OCI-LY7 (cell line): ENCODE measurements at regions of chr9 and their contacts with region 1.

Region 1: GRCh38 chr9:94681508-94681907 is 42.2 kb upstream of the FBP1 start:
- DNase-seq: peak; percentile 74
- H3K4me3 ChIP-seq: no peak overlapping the region
- H3K27ac ChIP-seq: no peak overlapping the region
- H3K4me1 ChIP-seq: no peaks in the 10 kb centered on the region
- CTCF ChIP-seq: peak; percentile 88

Region 2: GRCh38 chr9:94726495-94727191 is 45.1 kb after region 1 on chr9 and contains the start of gene AOPEP:
- CTCF ChIA-PET with region 1: no interaction called
- POLR2A ChIA-PET with region 1: no interaction called
- intact Hi-C with region 1: no loop called
- DNase-seq: peak; percentile 98
- H3K4me3 ChIP-seq: peak within 1 kb of the TSS; percentile 93
- H3K27ac ChIP-seq: no peak within 1 kb of the TSS
- H3K4me1 ChIP-seq: peaks cover 9% of the 10 kb centered on the region
- CTCF ChIP-seq: no peak
- total RNA-seq, gene AOPEP: 17.3 and 20.5 TPM in 2 replicates

Region 3: DNA sequence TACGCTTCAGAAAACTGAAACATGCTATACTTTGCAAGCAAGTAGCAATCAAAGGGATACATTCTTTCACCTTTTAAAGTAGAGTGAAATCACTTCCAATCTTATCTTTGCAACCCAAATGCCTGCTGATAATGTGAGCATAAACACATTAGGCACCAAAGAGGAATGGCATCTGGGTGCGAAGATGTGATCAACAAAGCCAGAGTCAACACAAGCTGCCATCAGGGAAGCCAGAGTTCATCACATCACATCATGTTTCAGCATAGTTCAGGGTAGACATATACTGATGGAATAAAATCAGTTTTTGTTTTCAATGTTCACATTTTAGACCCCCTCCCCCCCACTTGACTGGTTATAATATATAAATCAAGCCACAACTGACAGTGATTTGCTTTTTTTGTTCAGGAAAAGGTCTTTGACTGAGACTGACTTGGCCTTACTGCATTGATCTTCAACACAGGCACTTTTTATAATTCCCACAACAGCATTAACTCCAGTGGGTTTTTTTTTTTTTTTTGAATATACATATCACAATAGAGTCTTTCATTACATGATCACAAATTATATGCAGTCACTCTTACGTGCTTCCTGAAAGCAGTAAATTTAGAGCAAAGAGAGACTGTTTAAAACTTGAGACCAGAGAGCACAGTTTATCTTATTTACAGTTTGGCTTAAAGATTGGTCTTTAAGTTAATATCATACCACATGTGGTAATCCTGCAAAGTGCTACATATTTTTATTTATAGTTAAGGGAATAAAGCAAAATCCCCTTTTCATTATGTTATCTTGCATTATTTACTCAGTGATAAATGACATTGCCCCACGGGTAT is 65.2 kb after region 1 on chr9:
- CTCF ChIA-PET with region 1: no interaction called
- POLR2A ChIA-PET with region 1: no interaction called
- intact Hi-C with region 1: no loop called
- DNase-seq: no peak
- H3K4me3 ChIP-seq: no peak overlapping the region
- H3K27ac ChIP-seq: no peak overlapping the region
- H3K4me1 ChIP-seq: no peaks in the 10 kb centered on the region
- CTCF ChIP-seq: no peak

Region 4: DNA sequence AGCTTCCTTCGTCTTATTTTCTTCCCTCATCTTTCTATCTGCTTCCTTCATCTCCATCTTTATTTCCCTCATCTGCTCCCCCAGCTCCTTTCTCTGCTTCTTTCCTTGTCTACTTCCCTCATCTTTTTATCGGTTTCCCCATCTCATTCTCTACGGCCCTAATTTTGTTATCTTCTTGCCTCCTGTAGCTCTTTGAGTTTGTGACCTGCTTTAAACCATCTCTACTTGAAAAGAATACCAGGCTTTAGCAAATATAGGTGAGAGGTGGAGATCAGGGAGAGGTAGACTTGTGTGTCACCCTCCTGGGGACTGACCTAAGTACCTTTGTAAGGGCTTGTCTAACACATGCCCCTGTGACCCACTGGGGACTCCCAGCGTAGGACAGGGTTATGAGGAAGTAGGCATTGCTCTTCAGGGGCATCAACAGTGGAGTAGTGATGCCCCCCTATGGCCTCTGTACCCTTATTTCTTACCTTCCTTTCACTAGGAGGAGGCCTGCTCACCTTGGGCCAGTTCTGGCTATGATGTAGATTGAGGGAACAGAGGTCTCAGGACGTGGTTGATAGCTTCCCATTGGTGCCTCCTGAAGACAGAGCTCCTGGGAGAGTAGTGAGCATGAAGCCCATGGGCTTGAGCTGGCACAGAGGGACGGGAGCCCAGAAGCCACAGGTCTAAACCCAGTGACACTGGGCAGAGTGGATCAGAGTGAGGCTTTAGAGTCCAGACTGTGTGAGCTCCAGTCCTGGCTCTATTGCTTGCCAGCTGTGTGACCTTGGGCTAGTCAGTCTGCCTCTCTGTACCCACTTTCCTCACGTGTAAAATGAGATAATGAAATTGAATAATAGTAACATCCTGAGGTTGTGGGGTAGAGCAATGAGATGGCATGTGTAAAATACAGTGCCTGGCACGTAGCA is 236.6 kb after region 1 on chr9:
- CTCF ChIA-PET with region 1: no interaction called
- POLR2A ChIA-PET with region 1: no interaction called
- intact Hi-C with region 1: loop called (anchors 5 kb)
- DNase-seq: peak; percentile 28
- H3K4me3 ChIP-seq: no peak overlapping the region
- H3K27ac ChIP-seq: no peak overlapping the region
- H3K4me1 ChIP-seq: peaks cover 11% of the 10 kb centered on the region
- CTCF ChIP-seq: peak; percentile 48

Region 5: DNA sequence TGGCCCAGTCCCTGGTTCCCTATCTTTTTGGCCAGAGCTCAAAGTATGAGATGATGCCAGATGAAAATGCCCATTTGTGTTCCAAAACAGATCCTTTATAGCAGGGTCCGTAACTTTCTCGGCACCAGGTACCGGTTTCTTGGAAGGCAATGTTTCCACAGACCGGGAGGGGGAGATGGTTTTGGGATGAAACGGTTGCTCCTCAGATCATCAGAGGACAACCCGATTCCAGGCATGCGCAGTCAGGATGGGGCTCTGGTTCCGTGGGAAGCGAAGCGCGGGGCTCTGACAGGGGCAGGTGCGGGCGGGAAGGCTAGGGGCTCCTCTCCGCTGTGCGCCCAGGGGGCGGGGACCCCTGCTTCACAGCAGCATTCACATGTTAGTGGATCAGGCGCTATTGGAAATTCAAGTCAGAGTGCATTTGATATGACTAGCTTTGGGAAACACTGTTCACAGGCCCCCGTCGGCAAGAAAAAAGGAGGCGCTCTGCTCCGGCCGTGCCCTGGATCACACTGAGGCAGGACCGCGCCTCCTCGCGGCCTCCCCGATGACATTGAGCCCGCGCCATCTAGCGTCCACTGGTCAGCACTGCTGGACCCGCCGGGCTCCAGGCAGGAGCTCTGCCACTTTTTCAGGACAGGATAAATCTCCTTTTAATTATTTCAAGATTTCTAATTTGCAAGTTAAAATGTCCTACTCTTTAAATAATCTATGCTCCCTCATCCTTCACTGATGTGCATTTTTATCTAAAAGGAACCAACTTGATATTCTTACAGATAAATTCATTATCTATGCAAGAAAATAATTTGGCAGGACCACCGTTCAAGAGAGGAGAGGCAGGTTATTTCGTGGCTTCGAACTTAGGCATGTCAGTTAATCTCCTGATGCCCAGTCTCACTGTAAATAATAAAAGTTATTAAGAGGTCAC is 446.0 kb after region 1 on chr9:
- CTCF ChIA-PET with region 1: interaction called, 4 read pairs
- POLR2A ChIA-PET with region 1: no interaction called
- intact Hi-C with region 1: loop called (anchors 1 kb)
- DNase-seq: peak; percentile 62
- H3K4me3 ChIP-seq: no peak overlapping the region
- H3K27ac ChIP-seq: no peak overlapping the region
- H3K4me1 ChIP-seq: no peaks in the 10 kb centered on the region
- CTCF ChIP-seq: peak; percentile 85